ENCODE measurements at regions of chr14 and their contacts with region 1.

Region 1: GRCh38 chr14:38873941-38874612 is 229.0 kb downstream of the SEC23A start:
- DNase-seq: no peak
- H3K4me3 ChIP-seq: no peak overlapping the region
- H3K27ac ChIP-seq: peak overlapping the region in 4 of 59 donors; percentile 2 to 28 (median 11)
- H3K27me3 ChIP-seq: peaks cover 0 to 4% (median 0%) of the 10 kb centered on the region in 45 donors
- CTCF ChIP-seq: no peak

Region 2: GRCh38 chr14:38737686-38738407 is 136.2 kb before region 1 on chr14:
- intact Hi-C with region 1: no loop called
- DNase-seq: peak in 2 of 10 donors; percentile 41 to 43
- H3K4me3 ChIP-seq: peak overlapping the region in 1 of 59 donors; percentile 16
- H3K27ac ChIP-seq: peak overlapping the region in 3 of 59 donors; percentile 2 to 31 (median 29)
- H3K27me3 ChIP-seq: no peaks in the 10 kb centered on the region
- CTCF ChIP-seq: no peak

Region 3: DNA sequence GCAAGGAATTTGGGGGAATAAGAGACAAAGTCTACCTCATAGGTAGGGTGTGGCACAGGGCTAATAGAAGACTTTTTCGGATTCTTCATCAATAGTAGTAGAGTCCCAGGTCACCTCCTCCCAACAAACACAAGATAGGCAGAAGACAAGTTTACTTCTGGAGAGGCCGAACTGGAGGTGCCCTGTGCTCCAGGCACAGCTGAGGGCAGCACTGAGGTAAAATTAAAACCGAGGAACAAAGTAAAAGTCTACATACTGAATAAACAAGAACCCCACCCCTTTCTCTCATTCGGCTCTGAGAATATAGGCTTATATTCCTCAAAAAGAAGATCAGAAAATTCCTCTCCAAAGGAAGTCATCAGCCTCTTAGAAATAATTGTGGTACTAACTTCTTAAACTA is 67.4 kb after region 1 on chr14:
- intact Hi-C with region 1: loop called in 1 of 2 experiments (anchors 5 kb)
- DNase-seq: no peak
- H3K4me3 ChIP-seq: no peak overlapping the region
- H3K27ac ChIP-seq: peak overlapping the region in 23 of 59 donors; percentile 1 to 96 (median 31)
- H3K27me3 ChIP-seq: no peaks in the 10 kb centered on the region
- CTCF ChIP-seq: peak in 4 of 56 donors; percentile 9 to 16 (median 13)

Region 4: GRCh38 chr14:39203659-39204606 is 329.9 kb after region 1 on chr14:
- intact Hi-C with region 1: no loop called
- DNase-seq: no peak
- H3K4me3 ChIP-seq: no peak overlapping the region
- H3K27ac ChIP-seq: no peak overlapping the region
- H3K27me3 ChIP-seq: no peaks in the 10 kb centered on the region
- CTCF ChIP-seq: no peak

Measured in dorsolateral prefrontal cortex (tissue), 120 donors.